Activated CD4-positive, alpha-beta memory T cell treated with anti-CD3 and anti-CD28 coated beads for 36 hours (primary cell): ENCODE measurements at regions of chr1 and their contacts with region 1.

Region 1: DNA sequence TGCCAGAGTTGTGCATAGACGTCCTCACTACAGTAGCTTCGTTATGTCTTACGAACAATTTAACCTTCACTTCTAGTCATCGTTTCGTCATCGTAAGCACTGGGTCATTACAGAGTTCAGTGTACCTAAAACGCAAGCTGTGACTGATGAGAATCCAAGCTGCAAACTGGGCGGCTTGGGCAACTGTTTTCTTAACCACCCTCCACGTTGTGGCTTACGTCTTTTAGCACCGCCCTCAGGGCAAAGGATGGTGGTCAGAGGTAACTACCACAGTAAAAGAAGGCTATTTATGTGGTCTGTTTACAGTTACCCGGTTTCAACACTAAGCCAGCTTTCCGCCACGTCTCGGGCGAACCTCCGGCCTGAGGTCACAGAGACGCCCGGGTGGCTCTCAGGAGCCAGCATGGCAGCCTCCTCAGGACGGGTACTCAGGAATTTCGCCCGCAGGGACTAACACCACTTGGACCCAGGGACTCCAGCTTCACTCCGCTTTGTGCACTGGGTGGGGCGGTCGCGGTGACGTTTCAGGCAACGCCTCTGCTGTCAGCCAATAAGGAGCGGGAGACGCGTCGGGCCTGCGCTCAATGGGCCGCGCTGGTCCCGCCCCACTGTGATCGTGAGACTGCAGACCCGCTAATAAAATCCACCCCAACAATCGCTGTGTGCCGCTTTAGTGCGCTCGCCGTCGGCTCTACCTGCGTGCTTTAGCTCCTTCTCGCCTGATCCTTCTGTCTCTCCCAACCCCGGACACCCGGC is at the start of gene CTH:
- DNase-seq: peak; percentile 96
- H3K4me3 Mint-ChIP-seq: peak within 1 kb of the TSS; percentile 84
- H3K27ac Mint-ChIP-seq: peak within 1 kb of the TSS; percentile 83
- H3K4me1 Mint-ChIP-seq: peaks cover 14% of the 10 kb centered on the region
- H3K27me3 Mint-ChIP-seq: peaks cover 4% of the 10 kb centered on the region
- total RNA-seq, gene CTH: 23.0 to 26.0 TPM

Region 2: DNA sequence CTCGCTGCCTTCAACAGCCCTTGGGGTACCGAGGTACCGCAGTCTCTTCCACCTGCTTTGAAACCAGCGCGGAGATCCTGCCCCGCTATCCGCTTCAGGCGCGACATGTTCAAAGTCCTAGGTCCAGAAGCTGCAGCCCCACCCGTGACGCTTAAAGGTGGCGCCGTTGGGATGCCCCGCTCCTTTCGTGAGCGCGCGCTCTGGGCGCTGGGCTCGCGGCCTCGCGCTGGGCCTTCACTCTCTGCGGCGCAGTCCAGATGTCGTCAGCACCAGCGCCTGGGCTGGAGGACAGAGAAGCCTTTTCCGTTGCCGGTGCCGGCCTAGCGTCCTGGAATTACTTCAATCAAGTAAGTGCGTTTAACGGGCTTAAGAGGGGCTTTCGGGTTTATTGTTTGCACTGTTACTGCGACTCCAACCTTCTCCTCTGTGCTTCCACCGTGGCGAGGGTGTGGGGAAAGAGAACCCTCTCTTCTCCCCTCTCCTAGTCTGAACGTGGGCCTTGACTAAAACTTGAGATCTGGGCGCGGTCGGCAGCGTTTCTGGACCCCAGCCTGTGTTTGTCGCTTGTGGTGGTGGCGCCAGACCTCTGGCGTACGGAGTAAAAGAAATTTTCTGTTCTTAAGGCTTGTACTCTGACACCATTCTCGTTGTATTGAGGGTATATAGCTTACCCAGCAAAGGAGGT is 205.2 kb before region 1 on chr1 and contains the start of gene LRRC40:
- CTCF ChIA-PET with region 1: no interaction called
- POLR2A ChIA-PET with region 1: interaction called, 6 read pairs
- intact Hi-C with region 1: loop called (anchors 1 kb)
- DNase-seq: peak; percentile 98
- H3K4me3 Mint-ChIP-seq: peak within 1 kb of the TSS; percentile 99
- H3K27ac Mint-ChIP-seq: peak within 1 kb of the TSS; percentile 94
- H3K4me1 Mint-ChIP-seq: peaks cover 63% of the 10 kb centered on the region
- H3K27me3 Mint-ChIP-seq: no peaks in the 10 kb centered on the region
- total RNA-seq, gene LRRC40: 22.1 to 24.7 TPM

Region 3: DNA sequence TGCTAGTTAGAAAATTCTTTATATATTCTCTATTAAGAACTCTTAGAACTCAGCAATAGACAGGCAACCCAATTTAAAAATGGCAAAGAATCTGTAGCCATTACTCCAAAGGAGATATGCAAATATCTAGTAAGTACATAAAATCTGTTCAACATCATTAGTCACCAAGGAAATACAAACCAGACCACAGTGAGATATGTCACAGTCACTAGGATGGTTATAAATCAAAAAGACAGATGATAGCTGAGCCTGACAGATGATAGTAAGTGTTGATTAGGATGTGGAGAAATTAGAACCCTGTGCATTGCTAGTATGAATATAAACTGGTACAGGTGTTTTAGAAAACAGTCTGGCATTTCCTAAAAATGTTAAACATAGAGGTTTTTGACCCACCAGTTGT is 163.0 kb before region 1 on chr1:
- CTCF ChIA-PET with region 1: no interaction called
- POLR2A ChIA-PET with region 1: no interaction called
- intact Hi-C with region 1: loop called (anchors 1 kb)
- DNase-seq: no peak
- H3K4me3 Mint-ChIP-seq: no peak overlapping the region
- H3K27ac Mint-ChIP-seq: peak overlapping the region; percentile 70
- H3K4me1 Mint-ChIP-seq: peaks cover 29% of the 10 kb centered on the region
- H3K27me3 Mint-ChIP-seq: no peaks in the 10 kb centered on the region

Region 4: GRCh38 chr1:70438529-70438928 is 27.7 kb after region 1 on chr1:
- CTCF ChIA-PET with region 1: no interaction called
- POLR2A ChIA-PET with region 1: interaction called, 20 read pairs
- intact Hi-C with region 1: loop called (anchors 1 kb)
- DNase-seq: no peak
- H3K4me3 Mint-ChIP-seq: no peak overlapping the region
- H3K27ac Mint-ChIP-seq: peak overlapping the region; percentile 3
- H3K4me1 Mint-ChIP-seq: peaks cover 11% of the 10 kb centered on the region
- H3K27me3 Mint-ChIP-seq: no peaks in the 10 kb centered on the region

Region 5: GRCh38 chr1:71080739-71081696 is 670.2 kb after region 1 on chr1 and contains the start of gene ZRANB2:
- CTCF ChIA-PET with region 1: interaction called, 3 read pairs
- POLR2A ChIA-PET with region 1: interaction called, 8 read pairs
- intact Hi-C with region 1: loop called (anchors 1 kb)
- DNase-seq: peak; percentile 91
- H3K4me3 Mint-ChIP-seq: peak within 1 kb of the TSS; percentile 98
- H3K27ac Mint-ChIP-seq: peak within 1 kb of the TSS; percentile 99
- H3K4me1 Mint-ChIP-seq: peaks cover 20% of the 10 kb centered on the region
- H3K27me3 Mint-ChIP-seq: peaks cover 16% of the 10 kb centered on the region
- total RNA-seq, gene ZRANB2: 105 to 107 TPM